K562 (cell line): ENCODE measurements at regions of chr2 and their contacts with region 1.

Region 1: GRCh38 chr2:134918526-134919340 is at the start of gene CCNT2:
- DNase-seq: peak; percentile 97 to 99 (median 98)
- ATAC-seq: peak; percentile 89
- H3K4me3 ChIP-seq: peak within 1 kb of the TSS; percentile 79
- H3K27ac ChIP-seq: peak within 1 kb of the TSS; percentile 95
- H3K4me1 ChIP-seq: peaks cover 3 to 4% of the 10 kb centered on the region in 2 experiments; a peak in 4 of 5 replicates
- H3K27me3 ChIP-seq: no peaks in the 10 kb centered on the region
- CTCF ChIP-seq: no peak
- EP300 ChIP-seq: no peak
- POLR2A ChIP-seq: peak; percentile 72
- RAD21 ChIP-seq: no peak
- polyA plus RNA-seq, gene CCNT2: 12.6 to 16.9 TPM

Region 2: GRCh38 chr2:133097666-133098065 is 1821.1 kb before region 1 on chr2:
- CTCF ChIA-PET with region 1: no interaction called
- POLR2A ChIA-PET with region 1: no interaction called
- in situ Hi-C with region 1: no loop called
- intact Hi-C with region 1: no loop called
- DNase-seq: no peak
- ATAC-seq: no peak
- H3K4me3 ChIP-seq: no peak overlapping the region
- H3K27ac ChIP-seq: no peak overlapping the region
- H3K4me1 ChIP-seq: no peaks in the 10 kb centered on the region
- H3K27me3 ChIP-seq: no peaks in the 10 kb centered on the region
- CTCF ChIP-seq: no peak
- EP300 ChIP-seq: no peak
- POLR2A ChIP-seq: no peak
- RAD21 ChIP-seq: no peak

Region 3: DNA sequence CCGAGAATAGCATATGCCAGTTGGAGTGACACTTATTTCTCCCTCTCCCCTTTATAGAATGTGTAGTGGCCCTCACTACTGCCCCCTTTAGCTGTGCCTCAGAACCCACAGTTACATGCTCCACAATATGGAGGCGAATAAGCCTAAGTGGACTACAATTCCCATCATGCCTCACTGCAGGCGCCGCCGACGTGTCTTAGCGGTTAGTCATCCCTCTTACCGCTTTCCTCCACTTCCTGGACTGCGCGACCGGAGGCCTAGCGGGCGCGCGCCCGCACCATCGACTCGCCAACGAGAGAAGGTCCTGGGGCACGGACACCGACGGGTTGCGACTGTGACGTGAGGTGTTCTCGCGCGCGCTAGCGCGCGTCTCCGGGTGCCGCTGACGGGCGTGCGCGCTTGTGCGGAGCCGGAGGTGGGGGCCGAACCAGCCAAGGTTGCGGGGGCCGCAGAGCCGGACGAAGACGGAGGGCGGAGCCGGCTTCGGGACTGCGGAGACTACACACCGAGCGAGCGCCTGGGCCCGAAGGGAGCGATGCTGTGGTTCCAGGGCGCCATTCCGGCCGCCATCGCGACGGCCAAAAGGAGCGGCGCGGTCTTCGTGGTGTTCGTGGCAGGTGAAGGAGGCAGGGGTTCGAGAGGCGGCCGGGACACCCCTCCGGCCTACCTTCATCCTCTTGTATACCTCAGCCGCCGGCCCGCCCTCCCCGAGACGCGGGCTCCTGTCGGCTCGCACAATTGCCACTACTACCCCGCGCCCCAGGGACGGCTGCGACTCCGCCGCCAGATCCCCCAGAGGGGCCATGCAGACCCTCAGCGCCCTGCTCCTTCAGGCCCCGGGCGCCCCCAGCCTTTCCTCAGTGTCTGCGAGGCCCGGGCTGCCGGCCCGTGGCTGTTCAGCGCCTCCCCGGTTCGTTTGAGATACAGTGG is 822.9 kb after region 1 on chr2 and contains the start of gene UBXN4:
- CTCF ChIA-PET with region 1: no interaction called
- POLR2A ChIA-PET with region 1: no interaction called
- in situ Hi-C with region 1: no loop called
- intact Hi-C with region 1: loop called (anchors 2 kb)
- DNase-seq: peak; percentile 90 to 99 (median 92)
- ATAC-seq: peak; percentile 93
- H3K4me3 ChIP-seq: peak within 1 kb of the TSS; percentile 86
- H3K27ac ChIP-seq: peak within 1 kb of the TSS; percentile 93
- H3K4me1 ChIP-seq: peaks cover 8 to 10% of the 10 kb centered on the region in 2 experiments; a peak in 3 of 5 replicates
- H3K27me3 ChIP-seq: no peaks in the 10 kb centered on the region
- CTCF ChIP-seq: peak; percentile 62 to 88 (median 81)
- EP300 ChIP-seq: no peak
- POLR2A ChIP-seq: peak; percentile 86
- RAD21 ChIP-seq: no peak
- polyA plus RNA-seq, gene UBXN4: 30.4 to 48.1 TPM